ENCODE measurements at regions of chr20 and their contacts with region 1.

Region 1: DNA sequence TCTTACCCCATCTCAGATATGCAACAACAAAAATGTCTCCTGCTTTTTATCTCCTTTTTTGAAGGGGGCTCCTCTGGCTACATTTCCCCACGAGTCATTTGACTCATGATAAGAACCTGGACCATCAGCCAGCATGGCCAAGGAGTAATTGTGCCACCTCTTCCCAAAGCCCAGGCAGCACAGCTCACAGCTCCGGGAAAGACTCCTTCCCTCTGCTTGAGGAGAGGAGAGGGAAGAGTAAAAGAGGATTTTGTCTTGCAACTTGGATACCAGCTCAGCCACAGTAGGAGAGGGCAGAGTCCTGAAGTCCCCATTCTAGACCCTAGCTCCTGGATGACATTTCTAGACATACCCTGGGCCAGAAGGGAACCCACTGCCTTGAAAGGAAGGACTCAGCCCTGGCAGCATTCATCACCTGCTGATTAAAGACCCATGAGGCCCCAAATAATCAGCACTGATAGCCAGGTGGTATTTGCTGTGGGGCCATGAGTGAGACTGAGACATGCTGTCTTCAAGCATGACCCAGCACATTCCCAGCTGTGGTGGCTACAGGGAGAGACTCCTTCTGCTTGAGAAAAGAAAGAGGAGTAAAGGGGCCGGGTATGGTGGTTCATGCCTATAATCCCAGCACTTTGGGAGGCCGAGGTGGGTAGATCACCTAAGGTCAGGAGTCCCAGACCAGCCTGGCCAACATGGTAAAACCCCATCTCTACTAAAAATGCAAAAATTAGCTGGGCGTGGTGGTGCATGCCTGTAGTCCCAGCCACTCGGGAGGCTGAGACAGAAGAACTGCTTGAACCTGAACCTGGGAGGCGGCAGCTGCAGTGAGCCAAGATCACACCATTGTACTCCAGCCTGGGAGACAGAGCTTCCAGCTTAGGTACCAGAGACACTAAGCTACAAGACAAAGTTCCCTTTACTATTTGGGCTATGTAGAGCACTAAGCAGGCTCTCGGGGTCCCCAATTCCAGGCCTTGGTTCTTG is 28.1 kb downstream of the NCOA6 start:
- DNase-seq: no peak
- ATAC-seq: no peak
- H3K4me3 ChIP-seq: no peak overlapping the region
- H3K4me3 Mint-ChIP-seq: no peak overlapping the region
- H3K27ac ChIP-seq: no peak overlapping the region
- H3K27ac Mint-ChIP-seq: no peak overlapping the region
- H3K4me1 ChIP-seq: no peaks in the 10 kb centered on the region
- H3K4me1 Mint-ChIP-seq: peaks cover 48 to 66% (median 62%) of the 10 kb centered on the region in 3 donors
- H3K27me3 ChIP-seq: no peaks in the 10 kb centered on the region
- H3K27me3 Mint-ChIP-seq: no peaks in the 10 kb centered on the region

Region 2: GRCh38 chr20:34385464-34385863 is 411.8 kb before region 1 on chr20:
- CTCF ChIA-PET with region 1: interaction called in 1 of 2 experiments, 10 read pairs
- POLR2A ChIA-PET with region 1: no interaction called
- DNase-seq: no peak
- ATAC-seq: no peak
- H3K4me3 ChIP-seq: no peak overlapping the region
- H3K4me3 Mint-ChIP-seq: no peak overlapping the region
- H3K27ac ChIP-seq: no peak overlapping the region
- H3K27ac Mint-ChIP-seq: no peak overlapping the region
- H3K4me1 ChIP-seq: peaks cover 0 to 22% of the 10 kb centered on the region in 2 experiments
- H3K4me1 Mint-ChIP-seq: peaks cover 27 to 42% (median 38%) of the 10 kb centered on the region in 3 donors
- H3K27me3 ChIP-seq: no peaks in the 10 kb centered on the region
- H3K27me3 Mint-ChIP-seq: no peaks in the 10 kb centered on the region